ENCODE measurements at regions of chr3 and their contacts with region 1.

Region 1: GRCh38 chr3:111717601-111718000 is 122.5 kb upstream of the ZBED2 start:
- DNase-seq: peak; percentile 79
- H3K4me3 Mint-ChIP-seq: no peak overlapping the region
- H3K27ac Mint-ChIP-seq: no peak overlapping the region
- H3K4me1 Mint-ChIP-seq: no peaks in the 10 kb centered on the region
- H3K27me3 Mint-ChIP-seq: no peaks in the 10 kb centered on the region

Region 2: GRCh38 chr3:111577794-111578685 is 139.6 kb before region 1 on chr3:
- CTCF ChIA-PET with region 1: interaction called, 24 read pairs
- POLR2A ChIA-PET with region 1: no interaction called
- intact Hi-C with region 1: no loop called
- DNase-seq: no peak
- H3K4me3 Mint-ChIP-seq: peak overlapping the region; percentile 35
- H3K27ac Mint-ChIP-seq: peak overlapping the region; percentile 83
- H3K4me1 Mint-ChIP-seq: peaks cover 73% of the 10 kb centered on the region
- H3K27me3 Mint-ChIP-seq: no peaks in the 10 kb centered on the region

Region 3: DNA sequence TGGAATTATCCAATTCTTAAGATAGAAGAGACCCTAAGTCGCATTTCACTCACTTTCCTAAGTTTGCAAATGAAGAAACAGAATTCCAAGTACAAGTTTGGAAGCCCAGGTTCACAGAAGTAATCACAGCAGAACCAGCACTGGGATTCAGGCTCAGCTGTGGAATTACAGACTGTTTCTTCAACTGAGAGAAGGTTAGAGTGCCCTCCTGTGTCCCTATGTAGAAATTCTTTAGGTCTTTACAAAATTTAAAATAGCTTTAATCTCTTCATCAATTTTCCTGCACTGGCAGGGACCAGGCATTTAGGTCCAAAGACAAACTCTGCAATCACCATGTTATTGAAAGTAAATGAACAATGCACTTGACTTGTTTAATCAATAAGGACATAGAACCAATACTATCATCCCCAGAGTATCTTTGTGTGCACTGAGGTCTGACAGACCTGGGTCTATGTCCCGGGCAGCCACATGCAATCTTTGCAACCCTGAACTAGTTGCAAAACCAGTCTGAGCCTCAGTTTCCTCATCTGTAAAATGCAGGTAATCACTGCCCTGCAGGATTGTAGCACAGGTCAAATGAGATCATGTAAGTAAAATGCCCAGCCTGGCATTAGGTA is 26.2 kb before region 1 on chr3:
- CTCF ChIA-PET with region 1: interaction called, 12 read pairs
- POLR2A ChIA-PET with region 1: no interaction called
- intact Hi-C with region 1: no loop called
- DNase-seq: no peak
- H3K4me3 Mint-ChIP-seq: no peak overlapping the region
- H3K27ac Mint-ChIP-seq: no peak overlapping the region
- H3K4me1 Mint-ChIP-seq: peaks cover 38% of the 10 kb centered on the region
- H3K27me3 Mint-ChIP-seq: no peaks in the 10 kb centered on the region

Region 4: DNA sequence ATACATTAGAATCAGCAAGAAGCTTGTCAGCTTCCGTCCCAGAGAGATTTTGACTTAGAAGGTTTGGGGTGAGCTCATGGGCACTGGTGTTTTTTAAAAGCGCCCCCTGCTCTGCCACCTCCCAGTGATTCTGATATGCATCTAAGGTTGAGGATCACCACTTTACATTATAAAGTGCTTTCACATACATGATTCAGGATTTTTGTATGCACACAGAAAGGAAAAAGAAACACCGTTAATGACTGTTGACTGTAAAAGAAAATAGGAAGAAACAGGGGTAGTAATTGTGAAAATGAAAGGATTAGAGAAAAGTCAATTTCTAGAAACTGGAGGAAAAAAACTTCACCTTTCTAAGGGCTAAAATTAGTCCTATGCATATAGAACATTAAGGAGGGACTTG is 17.5 kb before region 1 on chr3:
- CTCF ChIA-PET with region 1: interaction called, 19 read pairs
- POLR2A ChIA-PET with region 1: no interaction called
- intact Hi-C with region 1: no loop called
- DNase-seq: peak; percentile 37
- H3K4me3 Mint-ChIP-seq: no peak overlapping the region
- H3K27ac Mint-ChIP-seq: peak overlapping the region; percentile 47
- H3K4me1 Mint-ChIP-seq: peaks cover 43% of the 10 kb centered on the region
- H3K27me3 Mint-ChIP-seq: no peaks in the 10 kb centered on the region

Region 5: DNA sequence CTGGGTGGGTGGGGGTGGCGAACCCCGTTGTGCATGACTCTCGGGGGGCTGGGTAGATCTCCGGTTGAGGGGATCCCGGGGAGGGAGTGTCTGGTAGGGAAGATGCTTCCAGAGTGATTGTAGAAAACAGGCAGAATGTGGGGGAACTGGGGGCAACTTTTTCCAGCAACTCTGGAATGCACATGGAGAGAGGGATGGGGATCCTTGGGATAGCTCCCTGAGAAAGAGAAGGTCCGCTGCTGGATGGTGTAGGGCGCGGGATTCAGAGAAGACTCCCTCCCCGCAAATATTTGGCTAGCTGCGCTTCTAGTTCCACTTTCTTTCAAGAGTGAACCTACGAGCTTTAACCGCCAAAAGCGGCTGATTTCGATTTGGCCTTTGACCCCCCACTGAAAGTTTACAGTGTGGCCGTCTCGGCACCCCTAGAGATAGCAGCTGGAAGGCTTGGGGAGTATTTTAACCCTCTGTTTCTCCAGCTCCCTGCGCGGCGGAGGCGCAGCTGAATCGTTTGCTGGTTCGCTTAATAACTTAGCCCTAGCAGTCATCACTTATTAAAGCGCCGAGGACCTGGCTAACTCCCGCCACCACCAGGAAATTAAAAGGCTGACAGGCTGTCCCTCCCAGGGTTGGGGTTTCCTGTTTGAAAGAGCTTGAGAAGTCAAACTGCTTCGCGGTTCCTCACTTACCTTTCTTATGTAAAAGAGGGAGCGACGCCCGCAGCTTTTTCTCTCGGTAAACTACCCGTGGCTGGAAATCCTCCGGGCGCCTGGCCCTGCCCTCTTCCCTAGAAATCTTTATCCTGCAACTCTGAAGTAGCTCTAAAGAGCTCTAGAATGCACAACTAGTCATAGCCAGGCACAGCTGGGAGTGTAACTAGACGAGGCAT is 142.6 kb after region 1 on chr3:
- CTCF ChIA-PET with region 1: interaction called, 43 read pairs
- POLR2A ChIA-PET with region 1: no interaction called
- intact Hi-C with region 1: loop called (anchors 1 kb)
- DNase-seq: peak; percentile 71
- H3K4me3 Mint-ChIP-seq: peak overlapping the region; percentile 79
- H3K27ac Mint-ChIP-seq: no peak overlapping the region
- H3K4me1 Mint-ChIP-seq: peaks cover 13% of the 10 kb centered on the region
- H3K27me3 Mint-ChIP-seq: peaks cover 7% of the 10 kb centered on the region

Region 6: DNA sequence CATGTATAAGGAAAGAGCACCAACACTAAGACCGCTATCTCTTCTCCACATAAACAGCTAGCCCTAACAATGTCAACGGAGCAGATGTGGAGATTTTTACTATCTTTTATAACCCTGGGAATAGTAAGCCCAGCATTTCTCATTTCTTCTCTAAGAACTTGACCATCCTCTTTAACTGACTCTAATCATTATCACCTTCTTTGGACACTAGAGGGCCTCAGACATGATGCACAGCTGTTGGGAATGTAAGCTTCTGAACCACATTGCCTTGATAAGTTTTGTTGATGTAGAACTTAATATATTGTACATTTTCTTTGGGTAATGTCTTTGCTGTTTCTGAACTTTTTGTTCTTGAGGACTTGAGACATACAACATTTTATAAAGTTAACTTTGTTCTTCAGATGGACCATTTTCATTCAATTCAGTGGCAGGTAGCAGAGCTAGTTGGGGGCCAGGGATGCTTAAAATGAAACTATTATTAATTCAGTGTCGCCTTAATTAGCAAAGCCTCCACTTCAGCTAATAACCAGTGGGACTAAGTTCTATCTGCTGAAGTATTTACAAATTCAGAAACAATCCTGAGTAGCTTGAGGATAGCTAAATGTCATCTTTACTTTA is 271.6 kb after region 1 on chr3:
- CTCF ChIA-PET with region 1: interaction called, 18 read pairs
- POLR2A ChIA-PET with region 1: no interaction called
- intact Hi-C with region 1: no loop called
- DNase-seq: no peak
- H3K4me3 Mint-ChIP-seq: no peak overlapping the region
- H3K27ac Mint-ChIP-seq: no peak overlapping the region
- H3K4me1 Mint-ChIP-seq: peaks cover 27% of the 10 kb centered on the region
- H3K27me3 Mint-ChIP-seq: no peaks in the 10 kb centered on the region

Region 7: DNA sequence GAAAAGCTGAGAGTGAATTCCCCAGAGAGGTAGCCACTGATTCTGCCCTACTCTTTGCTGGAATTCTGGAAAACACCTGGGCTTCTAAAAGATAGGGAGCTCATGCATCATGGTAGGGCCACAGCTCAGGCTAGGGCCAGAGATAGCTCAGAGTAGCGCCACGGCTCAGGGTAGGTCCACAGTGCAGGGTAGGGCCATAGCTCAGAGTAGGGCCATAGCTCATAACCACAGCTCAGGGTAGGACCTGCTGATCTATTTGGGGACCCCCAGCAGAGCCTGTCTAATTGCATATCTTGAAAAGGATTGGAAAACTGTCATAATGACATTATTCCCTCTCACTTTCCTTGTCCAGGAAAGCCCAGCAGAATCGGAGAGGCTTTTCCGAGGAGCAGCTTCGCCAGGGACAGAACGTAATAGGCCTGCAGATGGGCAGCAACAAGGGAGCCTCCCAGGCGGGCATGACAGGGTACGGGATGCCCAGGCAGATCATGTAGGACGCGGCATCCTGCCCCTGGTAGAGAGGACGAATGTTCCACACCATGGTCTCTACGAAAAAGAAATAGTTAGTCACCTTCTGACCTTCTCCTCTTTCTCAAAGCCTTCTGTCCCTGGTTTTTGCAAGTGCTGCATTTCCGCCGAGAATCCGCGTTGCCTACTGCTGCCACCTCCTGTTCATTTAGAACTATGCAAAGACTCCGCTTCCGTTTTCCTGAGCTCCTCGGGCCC is 295.6 kb after region 1 on chr3:
- CTCF ChIA-PET with region 1: interaction called, 115 read pairs
- POLR2A ChIA-PET with region 1: no interaction called
- intact Hi-C with region 1: loop called (anchors 1 kb)
- DNase-seq: peak; percentile 82
- H3K4me3 Mint-ChIP-seq: no peak overlapping the region
- H3K27ac Mint-ChIP-seq: peak overlapping the region; percentile 40
- H3K4me1 Mint-ChIP-seq: peaks cover 19% of the 10 kb centered on the region
- H3K27me3 Mint-ChIP-seq: no peaks in the 10 kb centered on the region

Measured in activated CD4-positive, alpha-beta memory T cell treated with anti-CD3 and anti-CD28 coated beads for 36 hours (primary cell).